BJ (cell line): ENCODE measurements at regions of chr2 and their contacts with region 1.

Region 1: DNA sequence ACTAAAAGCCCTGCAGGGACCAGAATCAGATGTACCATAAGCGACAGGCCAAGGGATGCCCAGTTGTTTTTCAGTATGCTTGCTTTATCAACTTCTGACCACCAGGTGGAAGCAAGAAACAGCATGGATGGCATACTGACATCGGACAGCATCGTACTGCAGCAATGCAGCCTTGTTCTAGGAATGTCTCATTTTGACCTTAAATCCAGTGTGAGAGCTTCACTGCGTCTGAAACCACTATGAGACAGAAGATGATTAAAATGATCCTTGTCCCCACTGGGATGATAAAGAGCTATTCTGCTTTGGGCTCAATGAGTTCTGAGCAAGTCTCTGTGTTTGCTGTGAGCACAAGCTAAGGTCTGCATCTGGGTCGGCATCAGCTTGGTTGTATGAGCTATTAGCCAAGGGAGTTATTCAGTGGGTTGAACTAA is 54.3 kb downstream of the CDK15 start:
- DNase-seq: no peak
- H3K4me3 ChIP-seq: no peak overlapping the region
- H3K27me3 ChIP-seq: no peaks in the 10 kb centered on the region
- CTCF ChIP-seq: peak; percentile 86

Region 2: DNA sequence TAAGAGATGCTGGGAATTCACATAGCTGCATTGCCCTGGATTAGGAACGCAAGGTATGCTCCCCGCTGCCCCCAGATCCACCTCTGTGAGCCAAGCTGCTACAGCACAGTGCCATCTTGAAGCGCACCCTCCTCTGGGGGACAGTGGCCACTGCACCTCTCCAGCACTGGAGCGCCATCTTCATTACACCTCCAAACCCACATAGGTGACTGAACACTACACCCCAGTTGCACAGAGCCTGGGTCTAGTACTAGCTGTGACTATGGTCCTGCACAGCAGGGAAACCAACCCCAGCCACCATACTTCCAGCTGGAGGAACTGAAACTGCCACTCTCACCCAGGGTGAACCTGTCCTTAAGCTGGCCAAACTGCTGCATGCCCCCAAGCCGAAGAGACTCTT is 302.0 kb before region 1 on chr2:
- CTCF ChIA-PET with region 1: no interaction called
- POLR2A ChIA-PET with region 1: no interaction called
- DNase-seq: no peak
- H3K4me3 ChIP-seq: no peak overlapping the region
- H3K27me3 ChIP-seq: no peaks in the 10 kb centered on the region
- CTCF ChIP-seq: no peak

Region 3: GRCh38 chr2:201795607-201796477 is 64.8 kb before region 1 on chr2:
- CTCF ChIA-PET with region 1: interaction called, 18 read pairs
- POLR2A ChIA-PET with region 1: no interaction called
- DNase-seq: no peak
- H3K4me3 ChIP-seq: no peak overlapping the region
- H3K27me3 ChIP-seq: no peaks in the 10 kb centered on the region
- CTCF ChIP-seq: peak; percentile 86

Region 4: GRCh38 chr2:201872591-201872990 is 11.9 kb after region 1 on chr2:
- CTCF ChIA-PET with region 1: interaction called, 25 read pairs
- POLR2A ChIA-PET with region 1: no interaction called
- DNase-seq: no peak
- H3K4me3 ChIP-seq: no peak overlapping the region
- H3K27me3 ChIP-seq: no peaks in the 10 kb centered on the region
- CTCF ChIP-seq: no peak

Region 5: DNA sequence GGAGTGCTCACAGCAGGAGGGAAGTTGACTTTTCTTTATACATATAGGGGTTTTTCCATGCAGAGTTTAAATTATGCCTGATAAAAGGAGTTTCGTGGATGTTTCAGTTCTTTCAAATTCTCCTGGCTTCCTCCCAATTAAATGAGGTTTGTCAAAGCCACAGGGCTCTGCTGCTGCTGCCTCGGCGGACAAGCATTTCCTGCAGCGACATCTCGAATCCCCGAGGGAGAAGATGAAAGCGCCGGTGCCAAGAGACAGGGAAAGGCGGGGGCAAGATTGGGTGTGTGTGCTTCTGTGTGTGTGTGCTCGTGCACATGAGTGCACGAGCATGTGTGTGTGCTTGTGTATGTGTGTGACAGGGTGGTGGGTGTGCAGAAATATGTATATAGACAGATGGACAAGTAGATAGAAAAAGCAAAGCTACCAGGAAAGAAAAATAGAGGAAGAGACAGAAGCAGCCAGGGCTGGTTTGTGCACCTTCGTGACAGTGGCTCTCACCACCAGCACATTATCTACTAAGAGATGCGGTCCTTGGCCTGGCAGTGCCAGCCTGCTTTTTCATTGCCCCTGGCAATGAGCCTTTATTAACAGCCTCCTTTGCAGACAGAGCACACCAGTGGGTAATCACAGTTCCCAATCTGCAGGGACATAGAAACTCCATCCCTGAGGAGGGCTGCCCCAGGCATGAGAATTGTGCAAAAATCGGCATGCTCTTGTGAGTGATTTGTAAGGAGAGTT is 21.9 kb after region 1 on chr2:
- CTCF ChIA-PET with region 1: interaction called, 15 read pairs
- POLR2A ChIA-PET with region 1: no interaction called
- DNase-seq: no peak
- H3K4me3 ChIP-seq: no peak overlapping the region
- H3K27me3 ChIP-seq: no peaks in the 10 kb centered on the region
- CTCF ChIP-seq: no peak

Region 6: DNA sequence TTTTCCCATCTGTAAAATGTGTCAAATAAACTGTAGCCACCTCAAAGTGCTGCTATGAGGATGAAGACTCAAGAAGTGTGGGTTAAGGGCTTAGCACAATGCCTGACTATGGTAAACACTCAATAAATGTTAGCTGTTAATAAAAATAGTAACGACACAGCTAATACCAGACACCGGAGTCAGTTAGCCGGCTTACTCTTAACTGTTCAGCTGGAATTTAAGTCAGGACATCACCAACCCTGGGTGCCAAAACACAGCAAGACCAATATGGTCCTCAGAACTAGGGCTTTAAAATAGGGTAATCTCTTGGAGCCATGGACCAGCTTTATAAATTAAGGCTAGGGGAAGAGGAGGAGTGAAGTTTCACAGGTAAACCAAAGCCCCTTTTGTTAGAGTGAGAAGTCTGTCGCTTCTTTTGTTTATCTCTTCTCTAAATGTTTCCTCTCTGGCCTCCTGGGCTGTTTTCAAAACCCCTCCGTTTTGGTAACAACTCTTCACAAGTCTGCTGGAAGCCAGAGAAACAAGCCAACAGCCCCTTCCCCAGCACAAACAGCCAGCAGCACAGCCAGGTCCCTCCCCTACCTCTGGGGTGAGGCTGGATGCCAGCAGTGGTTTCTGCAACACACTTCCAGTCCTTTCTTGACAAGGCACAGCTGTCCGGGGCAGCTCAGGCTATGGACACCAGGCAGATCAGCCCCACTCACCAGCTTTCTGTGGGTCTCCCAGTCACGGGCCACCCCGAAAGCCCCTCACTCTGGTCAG is 159.2 kb after region 1 on chr2:
- CTCF ChIA-PET with region 1: interaction called, 10 read pairs
- POLR2A ChIA-PET with region 1: no interaction called
- DNase-seq: no peak
- H3K4me3 ChIP-seq: no peak overlapping the region
- H3K27me3 ChIP-seq: no peaks in the 10 kb centered on the region
- CTCF ChIP-seq: no peak

Region 7: GRCh38 chr2:202034249-202035088 is 173.8 kb after region 1 on chr2:
- CTCF ChIA-PET with region 1: interaction called, 22 read pairs
- POLR2A ChIA-PET with region 1: no interaction called
- DNase-seq: no peak
- H3K4me3 ChIP-seq: peak overlapping the region; percentile 91
- H3K27me3 ChIP-seq: no peaks in the 10 kb centered on the region
- CTCF ChIP-seq: no peak

Region 8: GRCh38 chr2:202178342-202178958 is 317.8 kb after region 1 on chr2:
- CTCF ChIA-PET with region 1: interaction called, 48 read pairs
- POLR2A ChIA-PET with region 1: no interaction called
- DNase-seq: no peak
- H3K4me3 ChIP-seq: no peak overlapping the region
- H3K27me3 ChIP-seq: no peaks in the 10 kb centered on the region
- CTCF ChIP-seq: peak; percentile 79